ENCODE measurements at regions of chr7 and their contacts with region 1.

Region 1: GRCh38 chr7:149010451-149011010 is 17.8 kb downstream of the PDIA4 start:
- DNase-seq: no peak
- H3K4me3 ChIP-seq: no peak overlapping the region
- H3K27ac ChIP-seq: no peak overlapping the region
- H3K4me1 ChIP-seq: no peaks in the 10 kb centered on the region
- H3K27me3 ChIP-seq: no peaks in the 10 kb centered on the region
- CTCF ChIP-seq: no peak
- POLR2A ChIP-seq: no peak

Region 2: GRCh38 chr7:149050941-149051340 is 40.4 kb after region 1 on chr7:
- intact Hi-C with region 1: no loop called
- DNase-seq: no peak
- H3K4me3 ChIP-seq: no peak overlapping the region
- H3K27ac ChIP-seq: no peak overlapping the region
- H3K4me1 ChIP-seq: no peaks in the 10 kb centered on the region
- H3K27me3 ChIP-seq: no peaks in the 10 kb centered on the region
- CTCF ChIP-seq: no peak
- POLR2A ChIP-seq: no peak

Region 3: DNA sequence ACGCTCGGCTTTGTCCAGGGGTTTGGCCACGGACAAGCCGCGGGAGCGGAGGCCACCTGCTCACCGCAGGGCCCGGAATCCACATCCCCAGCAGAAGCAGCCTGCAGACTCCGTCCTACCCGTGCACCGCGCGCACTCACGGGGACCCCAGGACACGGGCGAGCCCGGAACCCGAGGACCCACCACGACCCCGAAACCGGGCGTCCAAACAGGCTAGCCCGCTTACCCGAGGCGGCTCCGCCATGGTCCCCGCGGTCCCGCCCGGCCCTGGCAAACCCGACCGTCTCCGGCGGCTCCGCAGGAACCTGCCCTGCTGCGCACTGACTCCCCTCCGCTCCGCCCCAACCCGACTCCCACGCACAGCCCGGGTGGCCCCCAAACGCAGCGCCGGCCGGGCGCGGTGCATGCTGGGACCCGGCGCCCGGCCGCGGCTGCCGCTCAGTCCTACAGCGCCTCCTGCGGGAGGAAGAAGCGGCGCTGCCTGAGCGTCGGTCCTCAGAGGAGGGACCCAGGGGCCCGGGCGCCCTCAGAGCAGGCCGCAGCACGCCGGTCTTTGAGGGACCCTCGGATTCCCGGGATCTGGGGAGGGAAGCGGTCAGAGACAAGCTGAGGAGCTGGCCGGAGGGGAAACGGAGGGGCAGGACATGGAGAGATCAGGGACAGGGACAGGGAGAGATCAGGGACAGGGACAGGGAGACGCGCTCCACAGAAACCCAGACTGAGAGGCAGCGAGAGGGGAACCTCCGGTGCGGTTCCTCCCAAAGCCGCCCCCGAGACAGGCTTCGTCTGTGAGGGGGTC is 80.1 kb after region 1 on chr7 and contains the start of gene ZNF786:
- intact Hi-C with region 1: loop called (anchors 5 kb)
- DNase-seq: no peak
- H3K4me3 ChIP-seq: peak within 1 kb of the TSS; percentile 74 to 94
- H3K27ac ChIP-seq: peak within 1 kb of the TSS; percentile 98
- H3K4me1 ChIP-seq: peaks cover 15% of the 10 kb centered on the region
- H3K27me3 ChIP-seq: no peaks in the 10 kb centered on the region
- CTCF ChIP-seq: peak; percentile 87 to 95 (median 94)
- POLR2A ChIP-seq: peak in 1 of 2 donors; percentile 24
- total RNA-seq, gene ZNF786: 8.3 TPM

Region 4: DNA sequence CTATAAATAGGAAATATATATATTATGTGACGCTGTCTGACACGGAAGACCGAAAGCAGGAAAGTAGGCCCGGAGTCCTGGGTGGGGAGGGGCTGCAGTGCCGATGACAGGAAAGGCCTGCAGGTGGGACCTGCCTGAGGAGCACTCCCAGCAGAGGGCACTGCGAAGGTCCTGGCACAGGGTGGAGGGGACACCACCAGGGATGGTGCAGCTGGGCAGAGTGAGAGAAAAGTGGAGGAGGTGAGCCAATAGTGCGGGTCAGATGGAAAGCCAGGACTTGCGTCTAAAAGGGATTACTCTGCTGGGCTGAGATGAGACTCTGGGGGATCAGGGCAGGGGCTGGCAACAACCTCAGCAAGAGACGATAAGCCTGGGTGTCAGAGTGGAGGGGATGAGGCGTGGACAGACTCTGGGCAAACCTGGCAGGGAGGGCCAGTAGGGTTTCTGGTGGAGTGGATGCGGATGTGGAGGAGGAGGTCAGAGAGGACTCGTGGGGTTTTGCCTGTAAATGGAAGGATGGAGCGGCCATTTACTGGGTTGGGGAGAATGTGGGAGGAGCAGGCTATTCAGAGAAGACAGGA is 605.2 kb after region 1 on chr7:
- intact Hi-C with region 1: loop called (anchors 5 kb)
- DNase-seq: no peak
- H3K4me3 ChIP-seq: no peak overlapping the region
- H3K27ac ChIP-seq: no peak overlapping the region
- H3K4me1 ChIP-seq: no peaks in the 10 kb centered on the region
- H3K27me3 ChIP-seq: no peaks in the 10 kb centered on the region
- CTCF ChIP-seq: no peak
- POLR2A ChIP-seq: no peak

Measured in vagina (tissue), 2 donors.